Activated naive CD4-positive, alpha-beta T cell treated with anti-CD3 and anti-CD28 coated beads for 36 hours (primary cell): ENCODE measurements at regions of chr7 and their contacts with region 1.

Region 1: GRCh38 chr7:106736508-106737201 is 75.7 kb upstream of the CCDC71L start:
- DNase-seq: peak; percentile 72
- H3K4me3 Mint-ChIP-seq: no peak overlapping the region
- H3K27ac Mint-ChIP-seq: peak overlapping the region; percentile 74
- H3K4me1 Mint-ChIP-seq: peaks cover 27% of the 10 kb centered on the region
- H3K27me3 Mint-ChIP-seq: no peaks in the 10 kb centered on the region

Region 2: DNA sequence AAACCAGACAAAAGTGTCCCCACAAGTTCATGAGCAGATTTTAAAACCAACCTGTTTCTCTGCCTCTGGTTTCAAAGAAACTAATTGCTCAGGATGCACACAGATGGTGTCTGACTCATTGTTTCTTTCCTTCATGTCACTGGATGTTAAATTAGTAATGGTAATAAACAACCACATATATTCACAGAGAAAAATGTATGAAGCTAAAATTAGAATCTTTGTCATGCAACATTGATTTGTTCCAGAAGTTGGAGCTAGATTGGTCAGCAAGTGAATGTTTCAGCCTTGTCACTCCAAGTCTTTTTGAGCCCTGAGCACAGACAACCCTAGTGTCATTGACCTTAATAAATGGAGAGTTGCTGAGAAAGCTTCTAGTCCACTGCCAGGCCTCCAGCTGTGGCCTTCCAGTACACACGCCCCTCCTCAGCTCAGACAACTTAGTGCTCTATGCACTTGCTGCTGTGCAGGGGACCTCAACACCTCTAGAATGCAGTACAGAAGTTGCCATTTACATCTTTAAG is 251.6 kb before region 1 on chr7:
- CTCF ChIA-PET with region 1: no interaction called
- intact Hi-C with region 1: loop called (anchors 5 kb)
- DNase-seq: peak; percentile 26
- H3K4me3 Mint-ChIP-seq: no peak overlapping the region
- H3K27ac Mint-ChIP-seq: peak overlapping the region; percentile 81
- H3K4me1 Mint-ChIP-seq: peaks cover 57% of the 10 kb centered on the region
- H3K27me3 Mint-ChIP-seq: peaks cover 23% of the 10 kb centered on the region

Region 3: GRCh38 chr7:106609416-106609815 is 127.2 kb before region 1 on chr7:
- CTCF ChIA-PET with region 1: no interaction called
- intact Hi-C with region 1: no loop called
- DNase-seq: no peak
- H3K4me3 Mint-ChIP-seq: no peak overlapping the region
- H3K27ac Mint-ChIP-seq: no peak overlapping the region
- H3K4me1 Mint-ChIP-seq: peaks cover 2% of the 10 kb centered on the region
- H3K27me3 Mint-ChIP-seq: no peaks in the 10 kb centered on the region

Region 4: DNA sequence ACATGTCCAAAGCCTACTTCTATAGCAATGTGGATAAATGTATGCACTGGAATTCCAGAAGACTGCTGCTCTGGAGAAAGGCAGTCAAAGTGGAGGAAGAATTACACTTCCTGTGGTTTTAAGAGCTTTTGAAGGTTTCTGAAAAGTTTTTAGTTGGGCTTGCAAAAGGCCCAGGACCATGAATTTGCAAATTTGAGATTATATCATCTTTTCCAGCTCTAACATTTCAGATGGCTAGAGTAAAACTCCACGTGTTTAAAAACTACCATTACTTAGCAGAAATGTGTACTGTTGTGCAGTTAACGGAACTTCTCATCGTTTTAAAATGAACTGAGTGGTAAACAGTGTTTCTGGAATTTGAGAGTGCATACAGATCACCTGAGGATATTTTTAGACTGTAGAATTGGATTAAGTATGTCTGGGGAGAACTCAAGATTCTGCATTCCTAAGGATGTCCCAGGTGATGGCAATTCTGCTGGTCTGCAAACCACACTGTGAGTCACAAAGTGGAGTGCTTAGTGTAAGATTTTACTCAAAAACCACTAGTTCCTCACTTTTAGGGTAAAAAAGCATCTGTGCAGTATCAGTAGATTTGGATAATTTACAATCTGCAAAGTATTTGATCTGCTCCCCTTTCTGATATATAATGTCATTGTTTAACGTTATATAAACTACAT is 42.8 kb before region 1 on chr7:
- CTCF ChIA-PET with region 1: interaction called, 14 read pairs
- intact Hi-C with region 1: no loop called
- DNase-seq: no peak
- H3K4me3 Mint-ChIP-seq: no peak overlapping the region
- H3K27ac Mint-ChIP-seq: no peak overlapping the region
- H3K4me1 Mint-ChIP-seq: peaks cover 14% of the 10 kb centered on the region
- H3K27me3 Mint-ChIP-seq: no peaks in the 10 kb centered on the region

Region 5: DNA sequence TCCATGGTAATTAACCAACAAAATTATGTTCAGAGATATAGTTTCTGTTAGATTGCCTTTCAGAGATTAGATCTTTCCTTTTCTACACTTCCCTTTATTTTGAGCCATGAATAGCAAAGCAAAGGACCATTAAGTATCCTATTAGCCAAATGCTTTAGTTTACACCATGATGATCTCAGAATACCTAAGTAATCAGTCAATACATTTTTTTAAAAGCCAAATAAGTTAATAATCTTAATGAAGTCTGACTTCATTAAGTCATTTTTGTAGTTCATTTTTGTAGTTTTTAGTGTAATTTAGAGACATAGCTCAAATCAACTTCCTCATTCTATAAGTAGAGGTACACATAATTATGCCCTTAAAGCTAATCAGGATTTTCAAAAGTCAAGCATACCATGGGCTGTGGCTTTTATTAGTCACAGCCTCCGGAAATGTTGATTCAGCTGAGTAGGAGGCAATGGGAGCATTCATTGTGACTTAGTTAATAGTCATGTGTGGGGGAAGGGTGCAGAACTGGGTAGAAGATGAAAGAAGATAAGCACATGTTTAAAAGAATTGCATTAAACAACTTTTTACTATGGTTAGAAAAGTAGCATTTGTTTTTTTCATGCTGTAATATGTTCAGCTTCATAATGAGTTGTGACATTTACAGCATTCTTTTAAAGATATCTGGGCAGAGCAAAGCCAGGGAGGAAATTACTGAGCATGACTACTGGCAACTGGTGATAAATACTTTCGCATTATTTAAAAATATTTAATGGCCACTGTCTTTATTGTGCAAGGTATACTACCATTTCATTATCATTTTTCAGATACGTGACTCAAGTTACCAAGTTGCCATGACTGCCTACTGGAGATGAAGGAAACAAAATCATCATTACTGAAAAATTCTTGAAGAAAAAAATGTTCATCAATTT is 18.4 kb before region 1 on chr7:
- CTCF ChIA-PET with region 1: interaction called, 42 read pairs
- intact Hi-C with region 1: loop called (anchors 2 kb)
- DNase-seq: peak; percentile 92
- H3K4me3 Mint-ChIP-seq: no peak overlapping the region
- H3K27ac Mint-ChIP-seq: no peak overlapping the region
- H3K4me1 Mint-ChIP-seq: peaks cover 10% of the 10 kb centered on the region
- H3K27me3 Mint-ChIP-seq: no peaks in the 10 kb centered on the region